Activated T-helper 1 cell treated with anti-CD3 and anti-CD28 coated beads, Interleukin-12 subunit alpha, Interleukin-12 subunit beta, Interleukin-2, Interleukin-4 antibody, amounts not matched to agents 30 ng/mL and 10 ng/mL and 1 ng/mL, durations not matched to agents 14 hours and 24 hours and 36 hours (primary cell): ENCODE measurements at regions of chr11 and their contacts with region 1.

Region 1: GRCh38 chr11:72102946-72103753 is at the start of gene LAMTOR1:
- DNase-seq: peak; percentile 97
- H3K4me3 Mint-ChIP-seq: peak within 1 kb of the TSS; percentile 95
- H3K27ac Mint-ChIP-seq: peak within 1 kb of the TSS; percentile 87
- H3K4me1 Mint-ChIP-seq: peaks cover 41% of the 10 kb centered on the region
- H3K27me3 Mint-ChIP-seq: no peaks in the 10 kb centered on the region
- total RNA-seq, gene LAMTOR1: 70.2 and 77.7 TPM in 2 replicates

Region 2: GRCh38 chr11:72040726-72041441 is 62.3 kb before region 1 on chr11:
- intact Hi-C with region 1: loop called (anchors 1 kb)
- DNase-seq: peak; percentile 59
- H3K4me3 Mint-ChIP-seq: no peak overlapping the region
- H3K27ac Mint-ChIP-seq: no peak overlapping the region
- H3K4me1 Mint-ChIP-seq: peaks cover 23% of the 10 kb centered on the region
- H3K27me3 Mint-ChIP-seq: no peaks in the 10 kb centered on the region